ENCODE measurements at regions of chr5 and their contacts with region 1.

Region 1: DNA sequence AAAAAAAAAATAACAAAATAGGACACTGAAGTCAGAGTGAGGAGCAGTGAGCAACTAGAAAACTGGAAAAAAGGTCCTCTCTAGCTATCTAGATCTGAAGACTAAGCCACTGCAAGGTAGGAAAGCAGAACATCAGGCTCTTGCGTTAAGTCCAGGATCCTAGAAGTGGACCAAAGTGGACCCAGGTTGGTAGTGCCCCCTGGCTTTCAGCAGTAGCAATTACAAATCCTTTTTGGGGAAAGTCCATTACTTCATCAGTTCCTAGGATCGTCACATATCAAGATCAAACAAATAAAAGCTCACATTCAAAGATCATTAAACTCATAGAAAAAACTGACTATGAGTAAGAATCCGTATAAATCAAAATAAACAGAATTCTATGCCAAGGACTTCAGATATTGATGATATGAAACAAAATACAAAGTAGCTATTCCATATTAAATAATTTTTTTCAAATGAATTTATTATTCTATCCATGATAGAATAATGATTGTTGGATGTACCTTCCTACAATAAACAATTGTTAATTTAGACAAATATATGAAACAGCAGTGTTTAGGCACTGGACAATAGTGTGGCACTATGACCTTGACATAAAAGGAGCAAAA is 6.5 kb upstream of the RICTOR start:
- DNase-seq: peak; percentile 39
- ATAC-seq: peak; percentile 71
- H3K4me3 Mint-ChIP-seq: no peak overlapping the region
- H3K27ac Mint-ChIP-seq: no peak overlapping the region
- H3K4me1 Mint-ChIP-seq: peaks cover 17% of the 10 kb centered on the region
- H3K27me3 Mint-ChIP-seq: peaks cover 33% of the 10 kb centered on the region
- CTCF ChIP-seq: peak; percentile 89

Region 2: DNA sequence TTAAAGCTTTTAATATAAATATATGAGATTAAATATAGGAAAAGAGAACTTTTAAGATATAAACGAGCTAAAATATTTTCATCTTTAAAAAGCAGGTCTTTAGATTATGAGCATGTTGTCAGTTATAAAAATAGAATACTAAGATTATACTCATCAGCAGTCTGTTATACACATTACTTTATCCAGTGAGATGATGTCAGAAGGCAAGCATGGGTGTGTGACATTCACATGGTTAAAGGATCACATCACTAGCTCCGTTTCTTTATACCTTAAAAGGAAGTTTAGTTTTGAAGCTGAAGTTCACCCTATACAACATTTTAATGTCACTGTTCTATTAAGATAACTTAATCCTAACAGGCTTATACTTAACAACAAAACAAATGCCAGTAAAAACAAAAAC is 66.2 kb before region 1 on chr5:
- CTCF ChIA-PET with region 1: interaction called, 17 read pairs
- POLR2A ChIA-PET with region 1: no interaction called
- intact Hi-C with region 1: no loop called
- DNase-seq: no peak
- ATAC-seq: no peak
- H3K4me3 Mint-ChIP-seq: no peak overlapping the region
- H3K27ac Mint-ChIP-seq: no peak overlapping the region
- H3K4me1 Mint-ChIP-seq: peaks cover 33% of the 10 kb centered on the region
- H3K27me3 Mint-ChIP-seq: no peaks in the 10 kb centered on the region
- CTCF ChIP-seq: no peak

Region 3: GRCh38 chr5:39092581-39093350 is 12.1 kb after region 1 on chr5:
- CTCF ChIA-PET with region 1: interaction called, 32 read pairs
- POLR2A ChIA-PET with region 1: no interaction called
- intact Hi-C with region 1: no loop called
- DNase-seq: no peak
- ATAC-seq: no peak
- H3K4me3 Mint-ChIP-seq: no peak overlapping the region
- H3K27ac Mint-ChIP-seq: no peak overlapping the region
- H3K4me1 Mint-ChIP-seq: peaks cover 7% of the 10 kb centered on the region
- H3K27me3 Mint-ChIP-seq: peaks cover 4% of the 10 kb centered on the region
- CTCF ChIP-seq: no peak

Region 4: DNA sequence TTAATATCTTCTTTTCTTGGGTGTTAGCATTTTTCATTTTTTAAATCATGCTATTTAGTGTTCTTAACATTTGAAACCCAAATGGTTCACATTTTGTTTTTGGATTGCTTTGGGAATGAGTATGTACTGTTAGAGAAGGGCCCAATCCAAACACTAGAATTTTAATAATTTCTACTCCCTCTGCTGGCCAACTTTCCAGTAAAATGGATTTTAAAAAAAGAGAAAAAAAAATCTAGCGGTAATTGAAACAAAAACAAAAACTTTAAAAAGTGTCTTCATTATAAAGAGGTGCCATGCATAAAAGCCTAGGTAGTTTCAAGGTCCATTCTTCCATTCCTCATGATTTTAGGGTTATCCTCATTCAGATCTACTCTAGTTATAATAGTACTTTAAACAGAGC is 25.6 kb after region 1 on chr5:
- CTCF ChIA-PET with region 1: interaction called, 18 read pairs
- POLR2A ChIA-PET with region 1: no interaction called
- intact Hi-C with region 1: no loop called
- DNase-seq: no peak
- ATAC-seq: no peak
- H3K4me3 Mint-ChIP-seq: no peak overlapping the region
- H3K27ac Mint-ChIP-seq: peak overlapping the region; percentile 9
- H3K4me1 Mint-ChIP-seq: peaks cover 7% of the 10 kb centered on the region
- H3K27me3 Mint-ChIP-seq: no peaks in the 10 kb centered on the region
- CTCF ChIP-seq: peak; percentile 6

Region 5: GRCh38 chr5:39164529-39165402 is 84.1 kb after region 1 on chr5:
- CTCF ChIA-PET with region 1: no interaction called
- POLR2A ChIA-PET with region 1: no interaction called
- intact Hi-C with region 1: no loop called
- DNase-seq: no peak
- ATAC-seq: peak; percentile 89
- H3K4me3 Mint-ChIP-seq: peak overlapping the region; percentile 67
- H3K27ac Mint-ChIP-seq: peak overlapping the region; percentile 96
- H3K4me1 Mint-ChIP-seq: peaks cover 89% of the 10 kb centered on the region
- H3K27me3 Mint-ChIP-seq: no peaks in the 10 kb centered on the region
- CTCF ChIP-seq: no peak

Region 6: DNA sequence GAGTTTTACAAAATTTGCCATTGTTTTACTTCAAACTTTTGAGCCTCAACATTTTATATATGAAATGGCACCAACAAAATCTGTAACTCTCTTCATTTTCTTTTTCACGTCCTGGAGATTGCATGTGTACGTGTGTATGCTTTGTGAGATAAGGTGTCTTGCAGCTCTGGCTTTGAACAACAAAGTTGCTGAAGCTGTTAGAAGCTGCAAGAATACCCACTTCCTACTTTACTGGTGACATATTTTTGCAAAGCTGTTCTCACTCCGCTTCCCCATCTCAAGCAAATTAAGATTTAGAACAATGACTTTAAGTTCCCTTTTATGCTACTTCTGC is 96.9 kb after region 1 on chr5:
- CTCF ChIA-PET with region 1: no interaction called
- POLR2A ChIA-PET with region 1: no interaction called
- intact Hi-C with region 1: no loop called
- DNase-seq: no peak
- ATAC-seq: peak; percentile 16
- H3K4me3 Mint-ChIP-seq: peak overlapping the region; percentile 55
- H3K27ac Mint-ChIP-seq: peak overlapping the region; percentile 89
- H3K4me1 Mint-ChIP-seq: peaks cover 95% of the 10 kb centered on the region
- H3K27me3 Mint-ChIP-seq: no peaks in the 10 kb centered on the region
- CTCF ChIP-seq: no peak

Region 7: DNA sequence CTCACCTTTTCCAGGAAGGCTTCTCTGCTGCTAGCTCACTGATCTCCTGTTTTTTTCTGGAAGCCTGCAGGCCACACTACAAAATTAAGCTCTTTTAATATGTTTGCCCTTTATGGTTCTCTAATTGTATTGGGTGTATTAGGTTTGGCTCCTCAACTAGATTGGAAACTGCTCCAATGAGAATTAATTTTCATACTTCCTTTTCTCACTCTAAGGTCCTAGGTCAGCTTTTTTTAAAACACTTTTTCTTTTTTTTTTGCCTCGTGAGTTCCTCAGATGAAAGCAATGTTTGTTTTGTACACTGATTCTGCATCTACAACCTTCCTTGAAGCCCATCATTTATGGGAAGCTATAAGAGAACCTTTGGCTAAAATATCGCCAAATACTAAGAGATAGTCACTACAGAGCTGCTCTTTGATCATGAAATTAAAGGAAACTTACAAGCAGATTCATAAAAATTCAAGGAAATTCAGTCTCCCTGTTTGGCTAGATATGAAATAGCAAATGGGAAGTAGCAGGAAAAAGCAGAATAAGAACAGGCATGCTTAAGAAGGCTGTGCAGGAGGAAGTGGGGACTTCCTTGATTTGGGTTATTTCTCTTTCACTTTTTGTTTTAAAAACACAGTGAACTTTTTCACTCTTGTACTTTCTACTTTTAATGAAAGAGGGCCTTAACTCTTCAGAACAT is 193.8 kb after region 1 on chr5:
- CTCF ChIA-PET with region 1: no interaction called
- POLR2A ChIA-PET with region 1: no interaction called
- intact Hi-C with region 1: no loop called
- DNase-seq: no peak
- ATAC-seq: peak; percentile 59
- H3K4me3 Mint-ChIP-seq: peak overlapping the region; percentile 79
- H3K27ac Mint-ChIP-seq: peak overlapping the region; percentile 99
- H3K4me1 Mint-ChIP-seq: peaks cover 49% of the 10 kb centered on the region
- H3K27me3 Mint-ChIP-seq: no peaks in the 10 kb centered on the region
- CTCF ChIP-seq: no peak